ENCODE measurements at regions of chr6 and their contacts with region 1.

Region 1: GRCh38 chr6:34922177-34922663 is 33.2 kb downstream of the ANKS1A start:
- DNase-seq: no peak
- H3K4me3 ChIP-seq: no peak overlapping the region
- H3K4me3 Mint-ChIP-seq: no peak overlapping the region
- H3K27ac Mint-ChIP-seq: no peak overlapping the region
- H3K4me1 ChIP-seq: no peaks in the 10 kb centered on the region; the same call in 1 of the 2 replicates
- H3K4me1 Mint-ChIP-seq: peaks cover 6% of the 10 kb centered on the region
- H3K27me3 ChIP-seq: no peaks in the 10 kb centered on the region
- H3K27me3 Mint-ChIP-seq: no peaks in the 10 kb centered on the region
- CTCF ChIP-seq: no peak

Region 2: DNA sequence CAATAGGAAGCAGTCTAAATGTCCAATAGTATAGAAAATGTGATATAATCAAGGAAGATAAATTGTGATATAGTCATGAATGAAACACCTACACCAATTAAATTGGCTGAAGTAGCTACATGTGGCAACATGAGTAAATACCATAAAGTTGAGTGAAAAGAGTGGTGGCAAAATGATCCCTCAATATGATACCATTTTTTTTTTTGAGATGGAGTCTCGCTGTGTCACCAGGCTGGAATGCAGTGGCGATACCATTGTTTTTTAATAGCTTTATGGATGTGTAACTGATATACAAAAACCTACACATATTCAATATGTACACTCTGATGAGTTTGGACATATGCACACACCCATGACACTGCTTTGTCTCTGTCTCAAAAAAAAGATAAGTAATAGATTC is 204.8 kb before region 1 on chr6:
- CTCF ChIA-PET with region 1: interaction called, 11 read pairs
- POLR2A ChIA-PET with region 1: no interaction called
- intact Hi-C with region 1: no loop called
- DNase-seq: no peak
- H3K4me3 ChIP-seq: no peak overlapping the region
- H3K4me3 Mint-ChIP-seq: no peak overlapping the region
- H3K27ac Mint-ChIP-seq: no peak overlapping the region
- H3K4me1 ChIP-seq: peaks cover 26% of the 10 kb centered on the region
- H3K4me1 Mint-ChIP-seq: peaks cover 15% of the 10 kb centered on the region
- H3K27me3 ChIP-seq: no peaks in the 10 kb centered on the region
- H3K27me3 Mint-ChIP-seq: no peaks in the 10 kb centered on the region
- CTCF ChIP-seq: no peak

Region 3: GRCh38 chr6:34875292-34876213 is 46.7 kb before region 1 on chr6:
- CTCF ChIA-PET with region 1: no interaction called
- POLR2A ChIA-PET with region 1: no interaction called
- intact Hi-C with region 1: loop called (anchors 1 kb)
- DNase-seq: no peak
- H3K4me3 ChIP-seq: no peak overlapping the region
- H3K4me3 Mint-ChIP-seq: no peak overlapping the region
- H3K27ac Mint-ChIP-seq: no peak overlapping the region
- H3K4me1 ChIP-seq: no peaks in the 10 kb centered on the region
- H3K4me1 Mint-ChIP-seq: no peaks in the 10 kb centered on the region
- H3K27me3 ChIP-seq: no peaks in the 10 kb centered on the region
- H3K27me3 Mint-ChIP-seq: no peaks in the 10 kb centered on the region
- CTCF ChIP-seq: no peak

Region 4: DNA sequence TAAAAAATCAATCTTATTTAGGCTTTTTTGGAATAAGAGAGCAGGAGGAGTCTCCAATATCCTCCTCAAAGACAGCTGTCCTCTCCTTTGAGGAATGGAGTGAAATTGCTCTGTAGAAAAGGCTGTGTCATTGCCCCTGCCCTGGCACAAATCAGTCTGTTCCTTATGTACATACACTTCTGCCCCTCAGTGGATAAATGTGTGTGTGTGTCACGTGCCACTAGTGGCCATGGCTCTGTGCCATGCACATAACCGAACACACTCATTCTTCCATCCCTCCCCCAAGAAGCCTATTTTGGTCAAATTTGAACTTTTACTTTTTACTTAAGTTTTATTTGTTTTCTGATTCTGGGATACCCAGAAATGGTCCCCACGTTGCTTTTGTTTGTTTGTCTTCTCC is 16.0 kb after region 1 on chr6:
- CTCF ChIA-PET with region 1: no interaction called
- POLR2A ChIA-PET with region 1: no interaction called
- intact Hi-C with region 1: no loop called
- DNase-seq: no peak
- H3K4me3 ChIP-seq: no peak overlapping the region
- H3K4me3 Mint-ChIP-seq: no peak overlapping the region
- H3K27ac Mint-ChIP-seq: peak overlapping the region; percentile 27
- H3K4me1 ChIP-seq: peaks cover 26% of the 10 kb centered on the region
- H3K4me1 Mint-ChIP-seq: peaks cover 22% of the 10 kb centered on the region
- H3K27me3 ChIP-seq: no peaks in the 10 kb centered on the region
- H3K27me3 Mint-ChIP-seq: no peaks in the 10 kb centered on the region
- CTCF ChIP-seq: no peak

Measured in Caco-2 (cell line).